Activated CD4-positive, alpha-beta memory T cell treated with anti-CD3 and anti-CD28 coated beads for 36 hours (primary cell): ENCODE measurements at regions of chr11 and their contacts with region 1.

Region 1: GRCh38 chr11:68213555-68214174 is 569 bp upstream of the KMT5B start:
- DNase-seq: peak; percentile 81
- H3K4me3 Mint-ChIP-seq: peak overlapping the region; percentile 69
- H3K27ac Mint-ChIP-seq: peak overlapping the region; percentile 82
- H3K4me1 Mint-ChIP-seq: peaks cover 44% of the 10 kb centered on the region
- H3K27me3 Mint-ChIP-seq: peaks cover 6% of the 10 kb centered on the region

Region 2: DNA sequence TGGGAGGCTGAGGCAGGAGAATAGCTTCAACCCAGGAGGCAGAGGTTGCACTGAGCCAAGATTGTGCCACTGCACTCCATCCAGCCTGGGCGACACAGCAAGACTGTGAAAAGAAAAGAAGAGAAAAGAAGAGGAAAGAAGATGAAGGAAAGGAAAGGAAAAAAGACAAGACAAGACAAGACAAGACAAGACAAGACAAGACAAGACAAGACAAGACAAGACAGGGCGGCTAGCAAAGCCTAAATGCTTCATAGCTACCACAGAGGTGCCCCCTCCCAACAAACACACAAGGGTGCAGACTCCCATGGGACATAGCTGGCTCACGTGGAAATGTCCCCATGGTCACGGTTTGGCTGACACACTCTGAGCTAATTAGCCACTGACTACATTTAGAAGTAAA is 15.4 kb before region 1 on chr11:
- CTCF ChIA-PET with region 1: interaction called, 27 read pairs
- POLR2A ChIA-PET with region 1: no interaction called
- intact Hi-C with region 1: no loop called
- DNase-seq: no peak
- H3K4me3 Mint-ChIP-seq: no peak overlapping the region
- H3K27ac Mint-ChIP-seq: no peak overlapping the region
- H3K4me1 Mint-ChIP-seq: peaks cover 62% of the 10 kb centered on the region
- H3K27me3 Mint-ChIP-seq: no peaks in the 10 kb centered on the region

Region 3: DNA sequence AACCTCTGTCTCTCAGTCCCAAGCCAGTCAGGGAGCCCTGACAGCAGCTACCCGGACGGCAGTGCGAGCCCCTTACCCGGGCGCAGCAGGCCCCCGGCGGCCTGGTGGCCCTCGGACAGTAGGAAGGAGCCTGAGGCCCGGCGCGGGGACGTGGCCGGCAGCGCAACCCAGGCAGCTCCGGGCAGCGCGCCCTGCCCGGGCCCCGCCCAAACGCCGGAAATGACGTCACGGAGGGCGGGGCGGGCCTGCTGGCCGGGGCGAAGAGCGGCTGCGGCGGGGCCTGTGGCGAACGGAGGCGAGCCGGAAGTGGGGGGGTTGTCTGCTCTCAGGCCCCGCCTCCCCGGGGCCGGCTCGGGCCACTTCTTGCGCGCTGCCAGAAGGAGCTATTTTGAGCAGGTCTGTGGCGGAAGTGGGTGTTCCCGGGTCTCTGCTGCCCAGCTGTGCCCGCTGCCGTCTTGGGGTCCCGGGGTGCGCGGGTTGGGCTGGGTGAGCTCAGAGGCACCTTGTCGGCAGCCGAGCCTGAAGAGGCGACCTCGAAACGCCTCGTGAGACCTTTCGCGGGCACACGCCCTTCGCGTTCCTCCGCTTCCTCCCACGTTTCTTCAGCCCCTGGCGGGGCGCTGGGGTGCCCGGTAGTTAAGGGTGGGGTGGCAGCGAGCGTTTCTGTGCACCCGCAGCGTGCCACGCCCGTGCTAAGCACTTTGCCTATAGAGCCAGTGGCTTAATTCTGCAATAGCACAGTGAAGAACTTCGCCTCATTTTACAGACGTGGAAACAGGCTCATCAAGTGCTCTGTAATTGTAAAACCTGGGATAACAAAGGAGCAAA is 58.3 kb after region 1 on chr11 and contains the start of gene C11orf24:
- CTCF ChIA-PET with region 1: no interaction called
- POLR2A ChIA-PET with region 1: no interaction called
- intact Hi-C with region 1: loop called (anchors 10 kb)
- DNase-seq: peak; percentile 95
- H3K4me3 Mint-ChIP-seq: peak within 1 kb of the TSS; percentile 97
- H3K27ac Mint-ChIP-seq: peak within 1 kb of the TSS; percentile 93
- H3K4me1 Mint-ChIP-seq: peaks cover 24% of the 10 kb centered on the region
- H3K27me3 Mint-ChIP-seq: no peaks in the 10 kb centered on the region
- total RNA-seq, gene C11orf24: 28.0 to 28.9 TPM

Region 4: DNA sequence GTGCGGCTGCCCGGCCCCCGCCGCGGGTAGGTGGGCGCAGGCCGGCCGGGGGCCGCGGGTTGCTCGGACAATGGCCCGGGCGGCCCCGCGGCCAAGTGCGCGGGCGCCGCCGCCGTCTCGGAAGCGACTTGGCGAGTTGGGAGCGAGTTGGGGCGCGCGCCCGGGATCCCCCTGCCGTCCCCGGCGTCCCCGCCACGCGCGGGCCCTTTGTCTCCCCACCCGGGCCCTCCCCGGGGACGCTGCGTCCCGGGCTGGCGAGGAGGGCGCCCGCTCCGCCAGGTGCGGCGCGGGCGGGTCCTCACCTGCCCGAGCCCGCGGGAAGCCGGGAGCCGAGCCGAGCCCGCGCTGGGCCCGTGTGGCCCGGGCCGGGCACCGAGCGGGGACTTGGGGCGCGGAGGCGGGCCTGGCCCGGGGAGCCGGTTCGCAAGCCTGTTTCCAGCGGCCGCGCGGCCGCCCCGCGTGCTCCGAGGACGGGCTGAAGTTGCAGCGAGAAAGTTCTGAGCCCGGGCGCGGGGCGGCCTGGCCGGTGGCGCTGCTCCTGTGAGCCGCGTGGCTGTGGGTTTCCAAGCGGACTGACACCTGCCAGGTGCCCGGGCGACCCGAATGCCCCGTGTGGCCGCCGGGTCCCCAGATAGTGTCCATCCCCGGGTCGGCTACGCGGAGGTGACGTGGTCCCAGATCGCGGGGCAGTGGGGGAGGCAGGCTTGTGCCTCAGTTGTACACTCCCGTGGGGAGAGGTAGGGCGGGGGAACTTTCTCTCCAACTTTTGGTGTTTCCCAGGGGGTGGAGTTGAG is 99.3 kb after region 1 on chr11:
- CTCF ChIA-PET with region 1: no interaction called
- POLR2A ChIA-PET with region 1: no interaction called
- intact Hi-C with region 1: no loop called
- DNase-seq: peak; percentile 30
- H3K4me3 Mint-ChIP-seq: peak overlapping the region; percentile 80
- H3K27ac Mint-ChIP-seq: no peak overlapping the region
- H3K4me1 Mint-ChIP-seq: peaks cover 7% of the 10 kb centered on the region
- H3K27me3 Mint-ChIP-seq: peaks cover 7% of the 10 kb centered on the region